Ovary (tissue), 10 donors: ENCODE measurements at regions of chr2 and their contacts with region 1.

Region 1: DNA sequence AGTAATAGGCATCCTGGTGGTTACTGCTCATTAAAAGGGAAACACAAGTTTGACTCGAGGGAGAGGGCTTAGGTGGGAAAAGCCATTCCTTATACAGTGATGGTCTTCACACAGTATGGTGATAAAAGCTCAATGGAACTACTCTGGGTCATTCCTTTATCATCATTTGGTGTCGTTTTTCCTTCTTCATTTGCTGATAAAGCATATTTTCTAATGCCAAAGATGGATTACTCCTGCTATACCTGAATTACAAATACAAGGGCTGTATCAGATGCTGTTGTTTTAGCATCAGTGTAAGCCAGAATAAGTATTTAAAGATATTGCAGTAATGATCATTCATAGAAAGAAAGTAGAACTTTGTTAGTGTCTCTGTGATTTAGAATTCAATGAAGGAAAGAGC is 563.7 kb downstream of the PLCL1 start:
- DNase-seq: no peak
- H3K4me3 ChIP-seq: no peak overlapping the region
- H3K27ac ChIP-seq: no peak overlapping the region
- H3K4me1 ChIP-seq: no peaks in the 10 kb centered on the region
- H3K27me3 ChIP-seq: no peaks in the 10 kb centered on the region
- CTCF ChIP-seq: no peak
- EP300 ChIP-seq: no peak
- POLR2A ChIP-seq: no peak

Region 2: DNA sequence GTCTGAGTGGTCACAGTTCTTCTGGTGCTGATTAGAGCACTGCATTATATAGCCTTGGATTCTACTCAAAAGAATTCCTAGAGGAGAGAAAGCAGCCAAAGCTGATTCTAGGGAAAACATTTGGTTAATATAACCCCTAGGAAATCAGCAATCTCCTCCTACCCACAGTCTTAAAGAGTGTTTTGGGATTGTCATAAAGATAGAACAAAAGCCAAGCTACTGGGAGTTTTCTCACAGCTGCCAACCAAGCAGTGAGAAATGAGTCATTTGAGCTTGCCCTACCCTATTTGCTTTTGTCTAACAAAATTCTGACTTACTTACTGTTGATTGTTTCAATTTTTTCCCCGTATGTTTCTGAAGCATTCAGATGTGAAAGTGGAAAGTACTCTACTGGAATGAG is 94.4 kb before region 1 on chr2:
- intact Hi-C with region 1: no loop called
- DNase-seq: no peak
- H3K4me3 ChIP-seq: no peak overlapping the region
- H3K27ac ChIP-seq: no peak overlapping the region
- H3K4me1 ChIP-seq: no peaks in the 10 kb centered on the region
- H3K27me3 ChIP-seq: no peaks in the 10 kb centered on the region
- CTCF ChIP-seq: no peak
- EP300 ChIP-seq: no peak
- POLR2A ChIP-seq: no peak

Region 3: GRCh38 chr2:199309973-199310372 is 941.9 kb after region 1 on chr2:
- intact Hi-C with region 1: loop called in 1 of 4 experiments (anchors 5 kb)
- DNase-seq: no peak
- H3K4me3 ChIP-seq: no peak overlapping the region
- H3K27ac ChIP-seq: no peak overlapping the region
- H3K4me1 ChIP-seq: no peaks in the 10 kb centered on the region
- H3K27me3 ChIP-seq: no peaks in the 10 kb centered on the region
- CTCF ChIP-seq: no peak
- EP300 ChIP-seq: no peak
- POLR2A ChIP-seq: no peak